ENCODE measurements at regions of chr3 and their contacts with region 1.

Region 1: GRCh38 chr3:188786424-188786823 is 385.3 kb upstream of the TPRG1 start:
- DNase-seq: no peak
- H3K4me3 Mint-ChIP-seq: no peak overlapping the region
- H3K27ac Mint-ChIP-seq: no peak overlapping the region
- H3K4me1 Mint-ChIP-seq: peaks cover 11% of the 10 kb centered on the region
- H3K27me3 Mint-ChIP-seq: no peaks in the 10 kb centered on the region

Region 2: DNA sequence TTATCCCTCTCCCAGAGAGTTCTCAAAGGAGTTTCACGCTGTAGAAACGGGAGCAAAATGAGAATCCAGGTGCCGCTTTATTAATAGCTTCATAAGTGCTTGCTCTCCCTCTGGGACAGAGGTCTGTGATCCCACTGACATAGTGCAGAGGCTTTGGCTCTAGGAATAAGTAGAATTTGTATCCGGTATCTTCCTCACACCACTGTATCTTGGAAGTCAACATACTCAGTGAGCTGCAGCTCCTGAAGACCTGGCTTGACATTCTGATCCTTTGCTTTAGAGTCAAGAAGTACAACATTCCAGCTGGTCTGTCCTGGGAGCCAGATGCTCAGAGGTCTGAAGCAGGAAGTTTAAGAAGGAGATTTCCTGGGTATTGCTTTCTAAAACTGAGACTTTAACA is 309.5 kb before region 1 on chr3:
- CTCF ChIA-PET with region 1: no interaction called
- intact Hi-C with region 1: no loop called
- DNase-seq: no peak
- H3K4me3 Mint-ChIP-seq: no peak overlapping the region
- H3K27ac Mint-ChIP-seq: no peak overlapping the region
- H3K4me1 Mint-ChIP-seq: peaks cover 4% of the 10 kb centered on the region
- H3K27me3 Mint-ChIP-seq: no peaks in the 10 kb centered on the region

Region 3: GRCh38 chr3:188764609-188765008 is 21.8 kb before region 1 on chr3:
- CTCF ChIA-PET with region 1: no interaction called
- intact Hi-C with region 1: loop called (anchors 2 kb)
- DNase-seq: no peak
- H3K4me3 Mint-ChIP-seq: no peak overlapping the region
- H3K27ac Mint-ChIP-seq: no peak overlapping the region
- H3K4me1 Mint-ChIP-seq: no peaks in the 10 kb centered on the region
- H3K27me3 Mint-ChIP-seq: no peaks in the 10 kb centered on the region

Region 4: GRCh38 chr3:188853856-188854771 is 67.7 kb after region 1 on chr3:
- CTCF ChIA-PET with region 1: no interaction called
- intact Hi-C with region 1: no loop called
- DNase-seq: no peak
- H3K4me3 Mint-ChIP-seq: no peak overlapping the region
- H3K27ac Mint-ChIP-seq: no peak overlapping the region
- H3K4me1 Mint-ChIP-seq: no peaks in the 10 kb centered on the region
- H3K27me3 Mint-ChIP-seq: no peaks in the 10 kb centered on the region

Region 5: DNA sequence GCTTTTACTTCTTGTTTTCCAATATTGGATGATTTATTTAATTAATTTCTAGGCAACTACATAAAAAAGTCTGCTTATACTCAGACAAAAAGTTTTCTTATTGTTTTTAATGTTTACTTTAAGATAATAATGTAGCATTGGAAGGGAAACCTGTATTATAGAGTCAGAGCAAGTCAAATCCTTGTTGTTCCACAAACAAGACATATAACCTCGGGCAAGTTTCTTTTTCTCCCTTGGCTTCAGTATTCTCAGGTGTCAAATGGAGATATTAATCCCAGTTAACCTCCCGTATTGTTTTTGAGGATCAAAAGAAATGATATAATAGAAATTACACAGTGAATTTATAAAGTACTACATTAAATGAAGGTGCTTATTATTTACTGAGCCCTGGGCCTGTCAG is 338.6 kb after region 1 on chr3:
- CTCF ChIA-PET with region 1: no interaction called
- intact Hi-C with region 1: no loop called
- DNase-seq: no peak
- H3K4me3 Mint-ChIP-seq: no peak overlapping the region
- H3K27ac Mint-ChIP-seq: no peak overlapping the region
- H3K4me1 Mint-ChIP-seq: no peaks in the 10 kb centered on the region
- H3K27me3 Mint-ChIP-seq: no peaks in the 10 kb centered on the region